Gastrocnemius medialis (tissue), 4 donors: ENCODE measurements at regions of chr11 and their contacts with region 1.

Region 1: GRCh38 chr11:30917859-30918478 is 331.8 kb upstream of the MPPED2 start:
- DNase-seq: no peak
- ATAC-seq: no peak
- H3K4me3 ChIP-seq: no peak overlapping the region
- H3K27ac ChIP-seq: no peak overlapping the region
- H3K4me1 ChIP-seq: no peaks in the 10 kb centered on the region
- H3K27me3 ChIP-seq: no peaks in the 10 kb centered on the region
- CTCF ChIP-seq: peak in 4 of 5 experiments; percentile 34 to 74 (median 58)
- POLR2A ChIP-seq: no peak

Region 2: GRCh38 chr11:29432719-29433325 is 1485.1 kb before region 1 on chr11:
- in situ Hi-C with region 1: loop called in 1 of 4 experiments (anchors 25 kb)
- intact Hi-C with region 1: no loop called
- DNase-seq: no peak
- ATAC-seq: no peak
- H3K4me3 ChIP-seq: no peak overlapping the region
- H3K27ac ChIP-seq: no peak overlapping the region
- H3K4me1 ChIP-seq: no peaks in the 10 kb centered on the region
- H3K27me3 ChIP-seq: no peaks in the 10 kb centered on the region
- CTCF ChIP-seq: peak in 2 of 5 experiments; percentile 11 to 25
- POLR2A ChIP-seq: no peak

Region 3: GRCh38 chr11:30346068-30346688 is 571.8 kb before region 1 on chr11:
- in situ Hi-C with region 1: loop called in 2 of 4 experiments (anchors 10 kb)
- intact Hi-C with region 1: loop called (anchors 2 kb)
- DNase-seq: no peak
- ATAC-seq: peak in 1 of 2 donors; percentile 56
- H3K4me3 ChIP-seq: no peak overlapping the region
- H3K27ac ChIP-seq: no peak overlapping the region
- H3K4me1 ChIP-seq: no peaks in the 10 kb centered on the region
- H3K27me3 ChIP-seq: no peaks in the 10 kb centered on the region
- CTCF ChIP-seq: peak; percentile 43 to 71 (median 60)
- POLR2A ChIP-seq: no peak

Region 4: GRCh38 chr11:30358536-30358935 is 559.4 kb before region 1 on chr11:
- in situ Hi-C with region 1: loop called in 1 of 4 experiments (anchors 10 kb)
- intact Hi-C with region 1: no loop called
- DNase-seq: no peak
- ATAC-seq: no peak
- H3K4me3 ChIP-seq: no peak overlapping the region
- H3K27ac ChIP-seq: no peak overlapping the region
- H3K4me1 ChIP-seq: no peaks in the 10 kb centered on the region
- H3K27me3 ChIP-seq: no peaks in the 10 kb centered on the region
- CTCF ChIP-seq: no peak
- POLR2A ChIP-seq: no peak